Posterior vena cava (tissue), 2 donors: ENCODE measurements at regions of chr6 and their contacts with region 1.

Region 1: GRCh38 chr6:105136431-105137350 is 43.1 kb downstream of the POPDC3 start:
- DNase-seq: peak; percentile 86

Region 2: DNA sequence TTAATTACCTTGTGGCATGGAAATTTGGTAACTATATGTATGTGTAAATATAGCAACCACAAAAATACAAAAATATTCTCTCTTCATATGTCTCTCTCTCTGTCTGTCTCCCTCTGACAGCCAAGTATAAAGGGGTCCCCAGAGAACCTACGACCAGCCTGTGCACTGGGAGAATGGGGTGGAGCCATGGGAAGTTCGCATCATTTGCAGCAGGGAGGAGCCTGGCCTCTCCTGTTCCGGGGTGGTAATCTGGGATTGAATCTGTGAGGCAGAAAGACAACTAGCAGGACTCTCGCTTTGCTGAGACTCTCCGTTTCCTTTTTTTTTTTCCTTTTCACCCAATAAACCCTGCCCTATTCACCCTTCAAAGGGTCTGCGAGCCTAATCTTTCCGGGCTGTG is 1386.1 kb before region 1 on chr6:
- intact Hi-C with region 1: no loop called
- DNase-seq: no peak

Region 3: GRCh38 chr6:104837158-104837557 is 299.5 kb before region 1 on chr6:
- intact Hi-C with region 1: no loop called
- DNase-seq: no peak

Region 4: GRCh38 chr6:104995989-104996617 is 140.6 kb before region 1 on chr6:
- intact Hi-C with region 1: no loop called
- DNase-seq: no peak

Region 5: DNA sequence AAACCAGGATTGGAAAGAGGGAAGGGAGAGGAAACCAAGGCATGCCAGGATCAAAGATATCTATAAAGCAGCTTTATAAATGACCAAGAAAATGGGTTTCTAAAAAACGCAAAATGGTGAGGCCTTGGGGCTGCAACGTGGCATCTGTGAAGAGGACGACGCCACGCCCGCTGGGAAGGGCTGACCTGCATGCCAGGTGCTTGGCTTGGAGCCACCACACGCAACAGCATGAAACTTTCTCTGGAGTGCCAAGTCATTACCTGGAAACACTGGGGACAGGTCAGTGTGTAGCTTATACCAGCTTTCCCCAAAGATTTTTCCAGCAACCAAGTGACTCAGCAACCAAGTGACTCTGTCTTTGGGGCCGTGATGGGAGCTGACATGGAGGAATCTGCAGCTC is 39.4 kb before region 1 on chr6:
- intact Hi-C with region 1: no loop called
- DNase-seq: no peak

Region 6: GRCh38 chr6:105402939-105403935 is 266.5 kb after region 1 on chr6 and contains the start of gene PREP:
- intact Hi-C with region 1: loop called in 1 of 2 experiments (anchors 10 kb)
- DNase-seq: peak; percentile 97
- total RNA-seq, gene PREP: 20.5 to 21.2 TPM